WTC11 (cell line): ENCODE measurements at regions of chr5 and their contacts with region 1.

Region 1: GRCh38 chr5:10552183-10553143 is 11.4 kb upstream of the ANKRD33B start:
- DNase-seq: no peak
- ATAC-seq: no peak
- H3K4me3 Mint-ChIP-seq: no peak overlapping the region
- H3K27ac Mint-ChIP-seq: peak overlapping the region; percentile 96
- H3K4me1 Mint-ChIP-seq: peaks cover 37% of the 10 kb centered on the region
- H3K27me3 Mint-ChIP-seq: peaks cover 8% of the 10 kb centered on the region
- CTCF ChIP-seq: no peak

Region 2: GRCh38 chr5:10600626-10601245 is 48.3 kb after region 1 on chr5:
- CTCF ChIA-PET with region 1: no interaction called
- POLR2A ChIA-PET with region 1: no interaction called
- DNase-seq: no peak
- ATAC-seq: no peak
- H3K4me3 Mint-ChIP-seq: no peak overlapping the region
- H3K27ac Mint-ChIP-seq: no peak overlapping the region
- H3K4me1 Mint-ChIP-seq: peaks cover 7% of the 10 kb centered on the region
- H3K27me3 Mint-ChIP-seq: no peaks in the 10 kb centered on the region; the same call in 1 of the 2 replicates
- CTCF ChIP-seq: no peak

Region 3: DNA sequence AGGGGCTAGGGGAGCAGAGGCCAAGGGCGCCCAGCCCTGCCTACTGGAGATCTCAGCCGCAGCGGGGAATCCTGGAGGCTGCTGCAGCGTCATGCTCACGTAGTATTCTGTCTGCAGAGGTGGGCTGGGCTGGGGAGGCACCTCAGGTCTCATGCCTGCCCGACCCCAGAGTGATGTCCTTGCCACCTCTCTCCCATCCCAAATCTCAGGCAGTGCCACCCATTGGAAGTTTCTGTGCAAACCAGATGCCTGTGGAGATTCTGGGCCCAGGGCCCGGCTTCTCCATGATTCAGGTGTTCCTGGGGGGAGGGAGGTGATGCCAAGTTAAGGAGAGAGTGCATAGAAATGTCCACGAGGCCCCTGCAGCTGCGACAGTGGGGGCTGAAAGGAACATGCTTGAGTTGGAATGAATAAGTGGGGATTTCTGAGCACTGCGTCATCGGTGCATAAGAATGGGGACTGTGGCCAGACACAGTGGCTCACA is 83.4 kb after region 1 on chr5:
- CTCF ChIA-PET with region 1: interaction called, 10 read pairs
- POLR2A ChIA-PET with region 1: no interaction called
- DNase-seq: no peak
- ATAC-seq: no peak
- H3K4me3 Mint-ChIP-seq: no peak overlapping the region
- H3K27ac Mint-ChIP-seq: no peak overlapping the region
- H3K4me1 Mint-ChIP-seq: peaks cover 57% of the 10 kb centered on the region
- H3K27me3 Mint-ChIP-seq: peaks cover 3% of the 10 kb centered on the region; the same call in 1 of the 2 replicates
- CTCF ChIP-seq: no peak

Region 4: DNA sequence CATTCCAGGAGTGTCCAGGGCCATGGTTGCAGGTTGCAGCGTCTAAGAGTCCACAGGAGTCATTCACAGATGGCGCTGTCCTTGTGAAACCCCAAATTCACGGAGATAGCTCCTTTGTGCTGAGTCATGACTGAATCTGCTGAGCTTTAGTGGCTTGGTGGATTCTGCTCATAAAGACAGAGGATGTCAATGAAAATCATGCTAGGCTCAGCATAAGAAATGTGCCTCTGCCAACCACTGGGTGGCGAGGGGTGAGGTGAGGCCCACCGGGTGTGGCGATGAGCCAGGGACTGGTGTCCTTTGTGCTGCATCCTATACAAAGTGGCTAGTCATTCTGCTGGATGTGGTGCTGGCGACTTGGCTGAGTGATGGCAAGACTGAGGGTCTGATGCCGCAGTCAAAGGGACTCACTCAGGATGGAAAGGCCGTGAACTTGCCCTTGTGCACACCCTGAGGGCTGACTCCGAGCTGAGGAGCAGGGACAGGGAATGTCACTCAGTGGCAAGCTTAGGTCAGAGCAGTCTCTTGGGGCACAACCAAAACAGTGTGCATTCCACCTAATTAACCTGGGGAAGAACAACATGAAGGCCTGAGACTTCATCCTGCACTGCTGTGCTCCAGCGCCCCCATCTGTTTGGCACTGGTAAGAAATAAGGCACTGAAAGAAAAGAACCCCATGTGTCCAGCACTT is 137.1 kb after region 1 on chr5:
- CTCF ChIA-PET with region 1: interaction called, 11 read pairs
- POLR2A ChIA-PET with region 1: no interaction called
- DNase-seq: peak; percentile 78
- ATAC-seq: peak; percentile 85
- H3K4me3 Mint-ChIP-seq: no peak overlapping the region
- H3K27ac Mint-ChIP-seq: peak overlapping the region; percentile 53
- H3K4me1 Mint-ChIP-seq: peaks cover 33% of the 10 kb centered on the region
- H3K27me3 Mint-ChIP-seq: no peaks in the 10 kb centered on the region
- CTCF ChIP-seq: peak; percentile 59; the same call in 1 of the 2 replicates